ENCODE measurements at regions of chr4 and their contacts with region 1.

Region 1: GRCh38 chr4:122758033-122758432 is 25.5 kb downstream of the BBS12 start:
- DNase-seq: no peak
- H3K4me3 ChIP-seq: no peak overlapping the region
- H3K27ac ChIP-seq: no peak overlapping the region
- H3K27me3 ChIP-seq: no peaks in the 10 kb centered on the region
- CTCF ChIP-seq: peak; percentile 66

Region 2: DNA sequence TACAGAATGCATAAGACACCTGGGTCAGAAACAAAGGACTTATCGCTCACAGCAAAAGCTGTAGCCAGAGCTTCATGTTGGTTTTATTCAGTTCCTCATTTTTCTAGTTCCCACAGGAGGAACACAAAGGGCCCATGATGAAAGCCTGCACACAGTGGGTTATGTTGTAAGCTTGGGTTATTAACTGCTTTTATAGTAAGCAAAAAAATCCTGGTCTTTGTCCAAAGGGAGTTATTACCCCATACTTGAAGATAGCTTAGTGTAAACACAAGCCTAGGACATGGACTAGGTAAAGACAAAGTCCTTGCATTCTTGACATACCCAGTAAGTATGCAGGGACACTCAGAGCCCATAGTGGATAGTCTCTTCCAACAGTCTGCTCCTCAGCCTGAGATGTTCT is 13.8 kb before region 1 on chr4:
- CTCF ChIA-PET with region 1: interaction called, 18 read pairs
- POLR2A ChIA-PET with region 1: no interaction called
- DNase-seq: no peak
- H3K4me3 ChIP-seq: no peak overlapping the region
- H3K27ac ChIP-seq: no peak overlapping the region
- H3K27me3 ChIP-seq: no peaks in the 10 kb centered on the region
- CTCF ChIP-seq: no peak

Region 3: DNA sequence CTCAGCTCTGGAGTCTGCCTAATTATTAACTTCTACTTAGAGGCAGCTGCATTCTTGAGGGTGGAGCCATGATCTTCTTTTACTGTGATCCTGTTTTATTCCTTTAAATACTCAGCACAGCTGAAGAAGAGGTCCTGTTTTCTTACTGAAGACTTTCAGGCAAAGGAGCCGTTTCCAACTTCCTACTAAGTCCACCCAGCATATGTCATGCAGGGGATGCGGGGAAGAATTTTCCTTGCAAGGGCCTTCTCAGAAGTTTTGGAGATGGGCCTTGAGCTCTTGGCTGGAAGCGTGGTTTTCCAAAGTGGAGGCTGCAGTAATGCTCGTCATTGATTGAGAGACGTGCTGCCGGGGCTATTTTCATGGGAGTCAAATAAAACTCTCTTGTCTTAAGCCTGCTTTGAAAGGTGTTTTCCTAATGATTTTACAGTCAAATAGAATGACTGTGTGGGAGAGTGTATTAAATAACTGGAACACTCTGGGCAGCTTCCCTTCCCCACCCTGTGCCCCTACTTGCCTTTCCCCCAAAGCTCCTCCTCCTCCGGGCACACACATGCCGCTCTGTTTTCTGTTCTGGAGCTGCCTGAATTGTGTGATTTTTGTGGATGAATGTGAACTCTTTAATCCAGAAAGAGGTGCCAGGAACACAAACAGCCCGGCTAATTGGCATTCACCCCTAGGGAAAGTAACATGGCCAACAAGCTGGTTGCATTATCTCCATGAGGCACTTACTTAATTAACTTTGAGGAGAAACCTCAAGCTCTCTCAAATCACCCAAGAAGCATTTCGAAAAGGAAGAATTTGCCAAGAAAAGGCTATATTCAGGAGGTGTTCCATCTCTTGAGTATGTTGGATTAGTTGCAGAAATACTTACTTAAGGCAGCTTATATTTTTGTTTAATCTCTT is 96.7 kb after region 1 on chr4:
- CTCF ChIA-PET with region 1: interaction called, 10 read pairs
- POLR2A ChIA-PET with region 1: no interaction called
- DNase-seq: no peak
- H3K4me3 ChIP-seq: peak overlapping the region; percentile 11; the same call in 1 of the 2 replicates
- H3K27ac ChIP-seq: no peak overlapping the region
- H3K27me3 ChIP-seq: no peaks in the 10 kb centered on the region
- CTCF ChIP-seq: no peak

Region 4: GRCh38 chr4:122922877-122923511 is 165.0 kb after region 1 on chr4:
- CTCF ChIA-PET with region 1: interaction called, 41 read pairs
- POLR2A ChIA-PET with region 1: interaction called, 4 read pairs
- DNase-seq: peak; percentile 57
- H3K4me3 ChIP-seq: peak overlapping the region; percentile 89
- H3K27ac ChIP-seq: peak overlapping the region; percentile 68
- H3K27me3 ChIP-seq: no peaks in the 10 kb centered on the region
- CTCF ChIP-seq: no peak

Measured in AG04450 (cell line).